Activated T-helper 1 cell treated with anti-CD3 and anti-CD28 coated beads, Interleukin-12 subunit alpha, Interleukin-12 subunit beta, Interleukin-2, Interleukin-4 antibody, amounts not matched to agents 30 ng/mL and 10 ng/mL and 1 ng/mL, durations not matched to agents 14 hours and 24 hours and 36 hours (primary cell): ENCODE measurements at regions of chr7 and their contacts with region 1.

Region 1: GRCh38 chr7:74417419-74417971 is 36.2 kb upstream of the GTF2IRD1 start:
- DNase-seq: peak; percentile 26
- H3K4me3 Mint-ChIP-seq: no peak overlapping the region
- H3K27ac Mint-ChIP-seq: no peak overlapping the region
- H3K4me1 Mint-ChIP-seq: no peaks in the 10 kb centered on the region
- H3K27me3 Mint-ChIP-seq: peaks cover 6% of the 10 kb centered on the region

Region 2: DNA sequence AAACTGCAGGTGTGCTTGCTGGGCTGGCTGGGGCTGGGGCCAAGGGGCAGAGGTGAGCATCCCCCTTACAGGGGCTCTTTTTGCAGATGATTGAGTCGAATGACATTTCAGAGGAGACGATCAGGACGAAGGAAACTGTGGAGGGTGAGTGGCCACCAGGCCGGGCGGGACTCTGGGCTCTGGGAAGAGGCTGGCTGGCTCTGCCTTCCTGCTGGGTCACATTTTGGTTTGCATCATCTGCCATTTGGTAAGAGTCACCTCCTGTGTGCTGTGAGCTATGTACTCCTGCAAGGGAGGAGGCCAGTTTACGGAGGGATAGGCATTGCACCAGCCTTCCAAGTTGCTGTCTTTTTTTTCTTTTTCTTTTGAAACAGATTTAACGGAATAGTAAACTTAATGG is 36.8 kb before region 1 on chr7:
- intact Hi-C with region 1: no loop called
- DNase-seq: no peak
- H3K4me3 Mint-ChIP-seq: no peak overlapping the region
- H3K27ac Mint-ChIP-seq: no peak overlapping the region
- H3K4me1 Mint-ChIP-seq: no peaks in the 10 kb centered on the region
- H3K27me3 Mint-ChIP-seq: peaks cover 6% of the 10 kb centered on the region

Region 3: GRCh38 chr7:74453322-74454011 is 36.0 kb after region 1 on chr7 and contains the start of gene GTF2IRD1:
- intact Hi-C with region 1: no loop called
- DNase-seq: peak; percentile 35
- H3K4me3 Mint-ChIP-seq: peak within 1 kb of the TSS; percentile 74
- H3K27ac Mint-ChIP-seq: peak within 1 kb of the TSS; percentile 77
- H3K4me1 Mint-ChIP-seq: peaks cover 12% of the 10 kb centered on the region
- H3K27me3 Mint-ChIP-seq: peaks cover 14% of the 10 kb centered on the region
- total RNA-seq, gene GTF2IRD1: 0.96 and 1.6 TPM in 2 replicates

Region 4: DNA sequence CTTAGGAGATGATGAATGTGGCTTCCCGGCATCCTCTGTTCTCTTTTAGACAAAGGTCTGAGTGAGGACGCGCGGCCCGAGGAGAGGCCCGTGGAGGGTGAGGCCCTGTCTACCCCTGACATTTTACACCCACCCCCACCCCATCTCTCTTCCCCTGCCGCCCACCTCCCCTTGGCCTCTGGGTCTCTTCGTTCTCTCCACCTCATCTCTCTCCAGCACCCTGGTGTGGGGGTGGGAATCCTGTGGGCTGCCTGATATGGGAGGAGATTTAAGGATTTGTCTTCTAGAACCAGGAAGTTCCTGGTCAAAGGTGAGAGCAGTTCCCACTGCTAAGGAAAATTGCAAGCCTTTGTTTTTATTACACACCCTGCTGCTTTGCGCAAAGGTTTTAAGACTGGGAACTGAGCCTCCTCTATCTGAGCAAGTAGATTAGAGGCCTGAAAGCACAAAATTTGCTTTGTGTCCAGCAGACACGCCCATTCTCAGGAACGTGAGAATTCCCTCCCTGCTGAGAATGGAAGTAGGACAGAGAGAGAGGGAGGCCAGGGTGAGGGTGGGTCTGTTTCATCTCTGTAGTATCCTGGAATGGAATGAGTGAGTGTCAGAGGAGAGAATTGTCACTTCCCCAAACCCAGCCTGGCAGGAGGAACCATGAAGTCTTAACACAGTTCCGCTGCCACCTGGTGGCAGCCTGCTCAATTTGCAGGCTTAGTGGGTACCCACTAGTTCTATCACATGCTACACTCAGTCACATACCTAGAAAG is 127.4 kb after region 1 on chr7:
- intact Hi-C with region 1: loop called (anchors 2 kb)
- DNase-seq: no peak
- H3K4me3 Mint-ChIP-seq: no peak overlapping the region
- H3K27ac Mint-ChIP-seq: no peak overlapping the region
- H3K4me1 Mint-ChIP-seq: no peaks in the 10 kb centered on the region
- H3K27me3 Mint-ChIP-seq: no peaks in the 10 kb centered on the region

Region 5: DNA sequence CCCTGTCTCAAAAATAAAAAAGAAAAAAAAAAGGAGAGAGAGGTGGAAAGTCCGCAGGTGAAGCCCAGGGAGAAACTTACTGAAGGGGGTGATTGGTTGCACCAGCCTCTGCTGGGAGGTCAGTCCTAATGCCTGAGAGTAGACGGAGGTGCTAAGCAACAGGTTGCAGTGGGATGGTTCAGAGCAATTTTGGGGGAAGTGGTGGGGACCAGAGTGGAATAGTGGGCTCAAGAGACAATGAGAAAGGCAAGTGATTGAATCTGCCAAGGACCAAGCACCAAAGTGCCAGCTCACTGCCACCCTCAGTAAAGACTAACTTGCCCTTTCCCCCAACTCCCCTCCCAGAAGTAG is 149.8 kb after region 1 on chr7:
- intact Hi-C with region 1: loop called (anchors 2 kb)
- DNase-seq: no peak
- H3K4me3 Mint-ChIP-seq: no peak overlapping the region
- H3K27ac Mint-ChIP-seq: peak overlapping the region; percentile 34
- H3K4me1 Mint-ChIP-seq: peaks cover 6% of the 10 kb centered on the region
- H3K27me3 Mint-ChIP-seq: peaks cover 4% of the 10 kb centered on the region

Region 6: DNA sequence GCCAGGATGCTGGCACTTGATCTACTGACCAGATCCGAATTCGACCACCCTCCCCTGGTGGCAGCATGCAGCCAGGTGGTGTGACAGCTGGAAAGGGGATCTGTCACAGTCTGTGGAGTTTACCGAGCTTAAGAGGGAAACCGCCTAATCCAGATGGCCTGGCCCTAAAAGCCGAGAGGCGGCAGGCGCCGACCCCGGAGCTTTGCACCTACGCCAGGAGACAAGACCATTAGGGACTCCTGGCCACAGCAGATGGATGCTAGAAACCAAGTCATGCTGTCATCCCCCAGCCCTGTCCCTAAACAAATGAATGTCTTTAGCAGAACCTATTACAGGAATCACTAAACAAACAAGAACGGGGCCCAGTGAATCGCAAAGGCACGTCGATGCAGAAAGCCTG is 628.4 kb after region 1 on chr7:
- intact Hi-C with region 1: loop called (anchors 2 kb)
- DNase-seq: no peak
- H3K4me3 Mint-ChIP-seq: no peak overlapping the region
- H3K27ac Mint-ChIP-seq: no peak overlapping the region
- H3K4me1 Mint-ChIP-seq: no peaks in the 10 kb centered on the region
- H3K27me3 Mint-ChIP-seq: no peaks in the 10 kb centered on the region